Calu3 (cell line): ENCODE measurements at regions of chr7 and their contacts with region 1.

Region 1: DNA sequence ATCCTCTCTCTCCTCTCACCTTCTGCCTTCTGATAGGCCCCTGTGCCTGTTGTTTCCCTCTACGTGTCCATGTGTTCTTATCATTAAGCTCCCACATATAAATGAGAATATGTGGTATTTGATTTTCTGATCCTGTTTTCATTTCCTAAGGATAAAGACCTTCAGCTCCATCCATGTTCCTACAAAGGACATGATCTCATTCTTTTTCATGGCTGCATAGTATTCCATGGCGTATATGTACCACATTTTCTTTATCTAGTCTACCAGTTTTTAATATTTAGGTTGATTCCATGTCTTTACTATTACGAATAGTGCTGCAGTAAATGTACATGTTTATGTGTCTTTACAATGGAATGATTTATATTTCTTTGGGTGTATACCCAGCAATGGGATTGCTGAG is 4.6 kb downstream of the OR2A12 start:
- DNase-seq: no peak
- H3K4me3 Mint-ChIP-seq: no peak overlapping the region
- H3K27ac Mint-ChIP-seq: no peak overlapping the region
- H3K4me1 Mint-ChIP-seq: no peaks in the 10 kb centered on the region
- H3K27me3 Mint-ChIP-seq: no peaks in the 10 kb centered on the region
- CTCF ChIP-seq: no peak

Region 2: DNA sequence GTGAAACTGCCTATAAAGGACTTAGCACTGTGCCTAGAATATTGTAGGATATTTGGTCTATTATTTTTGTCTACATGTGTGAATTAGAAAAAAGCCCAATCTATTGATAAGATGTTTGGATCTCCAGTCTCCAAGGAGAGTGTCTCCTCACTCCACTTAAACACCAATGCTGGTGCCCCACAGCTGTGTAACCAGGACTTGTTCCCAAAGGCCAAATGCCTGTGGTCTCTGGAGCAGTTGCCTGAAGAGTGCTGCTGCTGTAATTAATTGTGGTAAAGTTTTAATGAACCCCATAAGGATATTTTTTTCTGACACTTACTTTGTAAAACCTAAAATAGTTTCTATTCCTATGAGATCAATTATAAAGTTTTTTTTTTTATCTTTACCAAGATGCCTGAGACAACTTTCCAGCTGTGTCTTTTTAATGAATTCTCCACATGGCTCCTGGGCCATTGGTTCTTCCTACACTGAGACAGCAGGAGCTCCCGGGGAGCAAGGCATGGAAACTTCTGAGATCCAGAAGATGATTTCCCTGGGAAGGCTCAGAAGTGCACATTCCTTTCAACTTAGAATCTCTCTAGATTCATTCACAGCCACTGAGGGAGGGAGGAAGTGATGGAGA is 53.1 kb before region 1 on chr7:
- CTCF ChIA-PET with region 1: no interaction called
- intact Hi-C with region 1: loop called (anchors 5 kb)
- DNase-seq: no peak
- H3K4me3 Mint-ChIP-seq: no peak overlapping the region
- H3K27ac Mint-ChIP-seq: no peak overlapping the region
- H3K4me1 Mint-ChIP-seq: no peaks in the 10 kb centered on the region
- H3K27me3 Mint-ChIP-seq: no peaks in the 10 kb centered on the region
- CTCF ChIP-seq: no peak

Region 3: DNA sequence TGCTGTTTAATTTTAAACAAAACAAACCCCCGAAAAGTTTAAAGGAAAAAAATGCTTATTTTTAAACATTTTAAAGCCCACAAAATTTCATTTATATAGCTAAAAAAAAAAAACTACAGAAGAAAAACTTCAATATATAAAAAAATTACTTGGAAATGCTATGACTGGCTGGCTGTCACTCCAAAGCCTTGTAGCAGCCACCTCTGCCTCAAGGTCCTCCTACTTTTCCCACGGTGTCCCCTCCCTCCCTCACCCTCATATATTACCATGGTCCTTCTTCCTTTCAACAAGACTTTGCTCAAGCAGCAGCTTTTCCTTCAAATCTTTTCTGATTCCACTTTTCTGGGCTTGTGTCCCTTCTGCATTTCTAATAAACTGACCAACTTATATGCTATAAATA is 623.2 kb after region 1 on chr7:
- CTCF ChIA-PET with region 1: no interaction called
- intact Hi-C with region 1: no loop called
- DNase-seq: no peak
- H3K4me3 Mint-ChIP-seq: no peak overlapping the region
- H3K27ac Mint-ChIP-seq: no peak overlapping the region
- H3K4me1 Mint-ChIP-seq: no peaks in the 10 kb centered on the region
- H3K27me3 Mint-ChIP-seq: no peaks in the 10 kb centered on the region
- CTCF ChIP-seq: no peak